CD4-positive, alpha-beta T cell (primary cell): ENCODE measurements at regions of chr12 and their contacts with region 1.

Region 1: DNA sequence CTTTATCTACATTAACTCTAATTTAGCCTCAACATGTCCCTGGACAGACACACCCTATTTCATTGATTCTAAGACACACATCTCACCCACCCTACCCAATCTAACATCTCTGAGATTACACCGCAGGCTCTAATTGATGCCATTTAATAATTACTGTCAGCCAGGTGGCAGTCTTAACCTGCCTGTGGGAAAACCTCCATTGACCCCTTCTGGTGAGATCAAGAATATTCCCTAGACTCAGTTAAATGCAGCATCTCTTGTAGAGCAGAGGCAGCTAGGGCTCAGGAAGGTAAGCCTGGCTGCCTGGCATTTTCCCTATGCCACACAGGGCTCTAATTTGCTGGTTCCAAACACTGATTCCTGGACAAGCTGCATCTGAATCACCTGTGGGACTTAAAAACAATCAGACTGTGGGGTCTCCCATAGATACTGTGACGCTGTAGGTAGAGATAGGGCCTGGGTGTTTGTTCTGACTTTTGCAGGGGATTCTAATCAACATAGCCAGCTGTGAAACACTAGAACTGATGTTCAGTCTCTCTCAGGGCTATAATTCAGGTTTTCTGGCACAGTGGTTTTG is 14.3 kb downstream of the MCRS1 start:
- DNase-seq: peak in 4 of 14 experiments; percentile 33 to 74 (median 66)
- ATAC-seq: peak; percentile 81
- H3K4me3 ChIP-seq: no peak overlapping the region
- H3K4me3 Mint-ChIP-seq: no peak overlapping the region
- H3K27ac ChIP-seq: no peak overlapping the region
- H3K27ac Mint-ChIP-seq: no peak overlapping the region
- H3K4me1 ChIP-seq: peaks cover 16% of the 10 kb centered on the region
- H3K4me1 Mint-ChIP-seq: peaks cover 7% of the 10 kb centered on the region
- H3K27me3 ChIP-seq: peaks cover 4 to 14% of the 10 kb centered on the region in 2 experiments
- H3K27me3 Mint-ChIP-seq: peaks cover 9% of the 10 kb centered on the region
- CTCF ChIP-seq: peak; percentile 73

Region 2: DNA sequence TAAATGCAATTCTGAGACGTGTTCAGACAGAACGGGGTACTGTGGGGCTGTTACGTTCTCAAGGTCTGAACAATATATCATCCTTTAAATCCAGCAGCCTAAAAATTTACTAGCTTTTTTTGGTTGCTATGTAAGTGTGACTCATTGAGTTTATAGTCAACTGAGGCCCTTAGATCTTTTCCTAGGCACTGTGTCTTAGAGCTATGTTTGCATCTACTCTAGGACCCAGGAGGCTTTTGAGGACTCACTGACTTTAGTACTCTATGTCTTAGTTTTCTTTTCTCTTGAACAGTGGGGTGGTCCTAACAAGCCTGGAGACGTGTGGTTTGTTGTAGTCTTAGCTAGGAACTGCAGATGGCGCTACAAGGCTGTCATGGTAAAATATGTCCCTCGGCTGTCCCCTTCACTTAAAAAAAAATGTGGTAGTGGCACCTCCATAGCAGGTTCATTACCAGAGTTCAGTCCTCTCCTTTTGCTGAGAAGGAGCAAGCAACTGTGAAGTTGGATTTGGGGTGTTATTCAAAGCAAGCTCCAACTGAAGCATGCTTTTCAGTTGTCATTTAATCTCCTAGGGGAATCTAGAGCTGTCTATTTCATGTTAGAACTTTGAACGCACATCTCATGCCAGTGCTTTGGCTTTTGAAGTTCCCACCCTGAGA is 195.0 kb before region 1 on chr12:
- CTCF ChIA-PET with region 1: interaction called, 9 read pairs
- POLR2A ChIA-PET with region 1: no interaction called
- intact Hi-C with region 1: loop called in 1 of 2 experiments (anchors 1 kb)
- DNase-seq: peak in 8 of 14 experiments; percentile 31 to 86 (median 62)
- ATAC-seq: peak; percentile 96
- H3K4me3 ChIP-seq: no peak overlapping the region
- H3K4me3 Mint-ChIP-seq: peak overlapping the region; percentile 34
- H3K27ac ChIP-seq: no peak overlapping the region
- H3K27ac Mint-ChIP-seq: no peak overlapping the region
- H3K4me1 ChIP-seq: peaks cover 3% of the 10 kb centered on the region
- H3K4me1 Mint-ChIP-seq: peaks cover 7% of the 10 kb centered on the region
- H3K27me3 ChIP-seq: peaks cover 9 to 12% of the 10 kb centered on the region in 2 experiments
- H3K27me3 Mint-ChIP-seq: peaks cover 29% of the 10 kb centered on the region
- CTCF ChIP-seq: peak; percentile 78

Region 3: GRCh38 chr12:49828133-49829091 is 274.8 kb after region 1 on chr12 and contains the start of gene NCKAP5L:
- CTCF ChIA-PET with region 1: no interaction called
- POLR2A ChIA-PET with region 1: no interaction called
- intact Hi-C with region 1: no loop called
- DNase-seq: peak; percentile 88 to 98 (median 92)
- ATAC-seq: peak; percentile 95
- H3K4me3 ChIP-seq: peak within 1 kb of the TSS; percentile 64
- H3K4me3 Mint-ChIP-seq: peak within 1 kb of the TSS; percentile 98
- H3K27ac ChIP-seq: peak within 1 kb of the TSS; percentile 63 to 72
- H3K27ac Mint-ChIP-seq: peak within 1 kb of the TSS; percentile 89
- H3K4me1 ChIP-seq: peaks cover 31% of the 10 kb centered on the region
- H3K4me1 Mint-ChIP-seq: peaks cover 42% of the 10 kb centered on the region
- H3K27me3 ChIP-seq: no peaks in the 10 kb centered on the region
- H3K27me3 Mint-ChIP-seq: no peaks in the 10 kb centered on the region
- CTCF ChIP-seq: no peak
- total RNA-seq, gene NCKAP5L: 9.2 to 9.8 TPM

Region 4: DNA sequence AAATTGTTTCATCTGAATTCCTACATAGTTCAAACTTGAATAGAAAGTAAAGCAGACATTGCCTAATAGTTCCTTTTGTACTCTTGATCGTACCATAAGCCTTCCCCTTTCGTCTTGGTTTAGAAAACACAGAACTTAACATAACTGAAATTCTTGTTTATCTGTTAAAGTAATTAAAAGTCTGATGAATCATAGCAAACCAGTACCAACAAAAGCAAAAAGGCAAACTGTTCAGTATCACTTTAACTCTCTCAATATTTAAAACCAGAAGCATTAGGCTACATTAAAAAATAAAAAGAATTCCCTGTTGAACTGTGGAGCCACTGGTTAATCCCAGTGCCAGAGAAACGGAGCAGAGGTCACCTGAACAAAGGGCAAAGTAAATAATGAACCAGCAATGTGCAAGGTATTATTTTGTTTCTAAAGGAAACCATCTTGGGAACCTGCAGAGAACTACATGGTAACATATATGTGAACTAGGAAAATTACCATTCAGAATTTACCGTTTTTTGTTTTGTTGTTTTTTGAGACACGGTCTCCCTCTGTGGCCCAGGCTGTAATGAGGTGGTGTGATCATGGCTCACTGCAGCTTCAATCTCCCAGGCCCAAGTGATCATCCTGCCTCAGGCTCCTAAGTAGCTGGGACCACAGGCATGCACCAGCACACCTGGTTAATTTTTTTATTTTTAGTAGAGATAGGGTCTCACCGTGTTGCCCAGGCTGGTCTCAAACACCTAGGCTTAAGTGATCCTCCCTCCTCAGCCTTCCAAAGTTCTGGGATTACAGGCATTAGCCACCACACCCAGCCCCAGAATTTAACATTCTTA is 1381.6 kb after region 1 on chr12:
- CTCF ChIA-PET with region 1: no interaction called
- POLR2A ChIA-PET with region 1: no interaction called
- intact Hi-C with region 1: no loop called
- DNase-seq: no peak
- ATAC-seq: no peak
- H3K4me3 ChIP-seq: no peak overlapping the region
- H3K4me3 Mint-ChIP-seq: no peak overlapping the region
- H3K27ac ChIP-seq: no peak overlapping the region
- H3K27ac Mint-ChIP-seq: no peak overlapping the region
- H3K4me1 ChIP-seq: no peaks in the 10 kb centered on the region
- H3K4me1 Mint-ChIP-seq: no peaks in the 10 kb centered on the region
- H3K27me3 ChIP-seq: no peaks in the 10 kb centered on the region
- H3K27me3 Mint-ChIP-seq: no peaks in the 10 kb centered on the region
- CTCF ChIP-seq: no peak